A549 (cell line): ENCODE measurements at regions of chr10 and their contacts with region 1.

Region 1: GRCh38 chr10:73246783-73247508 is at the start of gene DNAJC9:
- DNase-seq: peak; percentile 91 to 98
- ATAC-seq: peak; percentile 89 to 91
- H3K4me3 ChIP-seq: peak within 1 kb of the TSS; percentile 78
- H3K27ac ChIP-seq: peak within 1 kb of the TSS; percentile 88 to 89
- H3K4me1 ChIP-seq: peaks cover 36% of the 10 kb centered on the region
- CTCF ChIP-seq: peak; percentile 13; the same call in 1 of the 3 replicates
- EP300 ChIP-seq: no peak
- POLR2A ChIP-seq: peak; percentile 85
- RAD21 ChIP-seq: peak in 1 of 2 experiments; percentile 26; a peak in 2 of 5 replicates
- polyA plus RNA-seq, gene DNAJC9: 42.7 and 56.3 TPM in 2 replicates

Region 2: DNA sequence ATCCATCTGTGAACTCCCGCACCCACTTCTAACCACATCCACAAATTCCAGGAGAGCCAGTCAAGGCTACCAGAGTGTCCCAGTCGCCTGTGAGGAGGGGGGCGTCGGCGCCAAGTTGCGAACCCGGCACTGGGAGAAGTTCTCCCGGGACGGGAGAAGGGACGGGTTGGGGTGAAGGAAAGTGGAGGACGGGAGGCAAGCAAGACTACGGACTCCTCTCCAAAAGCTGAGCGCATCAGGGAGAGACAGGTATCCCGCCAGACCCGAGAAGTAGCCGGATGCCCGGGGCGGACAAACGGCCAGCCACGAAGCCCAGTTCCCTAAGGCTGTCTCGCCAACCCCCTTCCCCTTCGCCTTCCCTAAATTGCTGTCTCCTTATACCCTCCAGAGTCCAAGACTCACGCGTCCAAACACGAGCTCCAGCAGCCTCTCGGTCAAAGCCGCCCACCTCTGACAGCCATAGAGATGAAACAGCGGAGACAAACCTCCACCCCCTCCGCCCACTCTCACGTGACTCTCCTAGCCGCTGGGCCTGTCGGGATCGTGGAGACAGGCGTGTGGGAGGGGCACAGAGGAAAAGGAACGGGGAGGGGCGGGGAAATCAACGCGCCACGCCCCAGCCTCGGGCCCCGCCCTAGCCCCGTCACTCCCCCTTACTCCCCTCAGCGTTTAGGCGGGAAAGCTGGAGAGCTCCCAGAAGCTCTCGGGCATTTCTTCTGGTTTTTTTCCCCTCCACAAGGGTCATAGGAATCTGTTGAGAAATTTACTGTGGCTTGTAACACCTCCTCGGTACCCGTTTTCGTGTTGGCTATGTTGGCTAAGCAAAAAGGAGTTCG is 621.1 kb before region 1 on chr10 and contains the start of gene MICU1:
- CTCF ChIA-PET with region 1: no interaction called
- POLR2A ChIA-PET with region 1: no interaction called
- DNase-seq: peak; percentile 96 to 97
- ATAC-seq: peak; percentile 99
- H3K4me3 ChIP-seq: peak within 1 kb of the TSS; percentile 59
- H3K27ac ChIP-seq: peak within 1 kb of the TSS; percentile 62 to 85
- H3K4me1 ChIP-seq: peaks cover 17% of the 10 kb centered on the region
- CTCF ChIP-seq: no peak
- EP300 ChIP-seq: no peak
- POLR2A ChIP-seq: no peak
- RAD21 ChIP-seq: peak in 1 of 2 experiments; percentile 18; a peak in 2 of 5 replicates
- polyA plus RNA-seq, gene MICU1: 58.6 and 61.3 TPM in 2 replicates

Region 3: DNA sequence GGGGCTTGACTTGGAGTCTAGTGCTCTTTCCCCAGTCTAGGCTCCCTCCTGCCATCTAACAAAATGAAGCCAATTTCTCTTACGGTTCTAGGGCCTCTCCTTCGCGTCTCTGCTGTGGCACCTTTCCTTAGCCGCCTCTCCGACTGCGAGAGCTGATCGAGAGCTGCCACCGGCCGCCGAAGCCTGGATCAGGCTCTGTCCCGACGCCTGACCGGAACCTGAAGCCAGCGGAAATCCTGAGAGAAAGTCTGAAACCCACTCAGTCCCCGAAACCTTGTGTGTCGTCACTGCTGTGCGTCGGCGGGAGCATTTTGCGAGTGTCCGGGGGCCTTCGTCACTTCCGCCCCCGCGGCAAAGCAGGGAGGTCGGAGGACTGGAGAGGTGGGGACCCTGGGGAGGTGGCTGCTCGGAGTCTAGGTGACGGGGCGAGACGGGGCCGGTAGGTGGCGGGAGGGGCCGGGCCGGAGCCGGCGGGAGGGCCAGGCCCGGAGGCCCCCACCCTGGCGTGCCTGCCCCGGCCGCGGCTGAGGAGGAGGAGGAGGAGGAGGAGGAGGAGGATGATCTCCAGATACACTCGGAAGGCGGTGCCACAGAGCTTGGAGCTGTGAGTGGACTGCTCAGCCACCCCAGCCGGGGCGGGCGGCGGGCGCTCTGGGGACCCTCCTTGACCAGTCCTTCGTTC is 79.0 kb before region 1 on chr10 and contains the starts of genes ECD and FAM149B1:
- CTCF ChIA-PET with region 1: interaction called, 5 read pairs
- POLR2A ChIA-PET with region 1: interaction called, 13 read pairs
- DNase-seq: peak; percentile 89 to 95
- ATAC-seq: peak; percentile 98
- H3K4me3 ChIP-seq: peak within 1 kb of the TSS; percentile 68
- H3K27ac ChIP-seq: peak within 1 kb of the TSS; percentile 77 to 95
- H3K4me1 ChIP-seq: 0 out of 3 replicates have a peak, but pooled peaks cover 6% of the 10 kb centered on the region
- CTCF ChIP-seq: no peak; the same call in 2 of the 3 replicates
- EP300 ChIP-seq: no peak
- POLR2A ChIP-seq: peak; percentile 81
- RAD21 ChIP-seq: no peak
- polyA plus RNA-seq, gene ECD: 53.3 and 53.6 TPM in 2 replicates
- polyA plus RNA-seq, gene FAM149B1: 25.5 and 26.7 TPM in 2 replicates

Region 4: GRCh38 chr10:73207883-73208282 is 39.1 kb before region 1 on chr10:
- CTCF ChIA-PET with region 1: no interaction called
- POLR2A ChIA-PET with region 1: no interaction called
- DNase-seq: peak in 1 of 2 experiments; percentile 9
- ATAC-seq: no peak
- H3K4me3 ChIP-seq: no peak overlapping the region
- H3K27ac ChIP-seq: no peak overlapping the region
- H3K4me1 ChIP-seq: peaks cover 7% of the 10 kb centered on the region; the same call in 2 of the 3 replicates
- CTCF ChIP-seq: no peak
- EP300 ChIP-seq: no peak
- POLR2A ChIP-seq: no peak
- RAD21 ChIP-seq: no peak

Region 5: DNA sequence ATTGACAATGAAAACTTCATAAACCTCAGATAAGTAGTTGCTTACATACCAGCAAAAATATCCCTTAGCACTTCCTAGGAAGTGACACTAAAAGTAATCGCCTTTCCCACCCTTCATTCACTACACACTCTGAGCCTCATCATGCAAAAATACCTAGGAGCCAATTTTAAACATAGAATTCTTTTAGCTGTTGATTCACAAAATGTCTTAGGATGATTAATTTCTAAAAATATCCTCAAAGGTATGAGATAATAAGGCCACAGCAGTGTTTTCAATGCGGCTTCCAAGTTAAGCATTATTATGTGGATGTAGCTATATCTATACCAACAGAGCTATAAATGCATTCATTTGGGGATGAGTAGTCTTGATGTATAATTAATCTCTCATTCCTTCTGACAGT is 13.1 kb before region 1 on chr10:
- CTCF ChIA-PET with region 1: no interaction called
- POLR2A ChIA-PET with region 1: interaction called, 15 read pairs
- DNase-seq: no peak
- ATAC-seq: no peak
- H3K4me3 ChIP-seq: no peak overlapping the region
- H3K27ac ChIP-seq: no peak overlapping the region
- H3K4me1 ChIP-seq: no peaks in the 10 kb centered on the region
- CTCF ChIP-seq: no peak
- EP300 ChIP-seq: no peak
- POLR2A ChIP-seq: no peak
- RAD21 ChIP-seq: no peak

Region 6: GRCh38 chr10:73358331-73359279 is 111.7 kb after region 1 on chr10 and contains the start of gene CFAP70:
- CTCF ChIA-PET with region 1: no interaction called
- POLR2A ChIA-PET with region 1: interaction called, 14 read pairs
- DNase-seq: peak; percentile 95 to 96
- ATAC-seq: peak; percentile 93 to 98
- H3K4me3 ChIP-seq: peak within 1 kb of the TSS; percentile 67
- H3K27ac ChIP-seq: peak within 1 kb of the TSS; percentile 65 to 83
- H3K4me1 ChIP-seq: peaks cover 6% of the 10 kb centered on the region; the same call in 1 of the 3 replicates
- CTCF ChIP-seq: no peak
- EP300 ChIP-seq: no peak
- POLR2A ChIP-seq: peak; percentile 62
- RAD21 ChIP-seq: no peak
- polyA plus RNA-seq, gene CFAP70: 0.95 and 0.98 TPM in 2 replicates

Region 7: GRCh38 chr10:73413528-73414229 is 166.7 kb after region 1 on chr10 and contains the start of gene ANXA7:
- CTCF ChIA-PET with region 1: no interaction called
- POLR2A ChIA-PET with region 1: interaction called, 15 read pairs
- DNase-seq: peak; percentile 88 to 98
- ATAC-seq: peak; percentile 95 to 98
- H3K4me3 ChIP-seq: peak within 1 kb of the TSS; percentile 76
- H3K27ac ChIP-seq: peak within 1 kb of the TSS; percentile 88 to 98
- H3K4me1 ChIP-seq: peaks cover 27% of the 10 kb centered on the region; the same call in 2 of the 3 replicates
- CTCF ChIP-seq: peak; percentile 24; the same call in 1 of the 3 replicates
- EP300 ChIP-seq: no peak
- POLR2A ChIP-seq: peak; percentile 62
- RAD21 ChIP-seq: no peak
- polyA plus RNA-seq, gene ANXA7: 150 and 161 TPM in 2 replicates